Right cardiac atrium (tissue), 5 donors: ENCODE measurements at regions of chr20 and their contacts with region 1.

Region 1: GRCh38 chr20:23050847-23051631 is 1.6 kb upstream of the THBD start:
- DNase-seq: peak; percentile 86 to 96 (median 94)
- ATAC-seq: peak; percentile 60 to 62
- H3K4me3 ChIP-seq: peak overlapping the region; percentile 39
- H3K27ac ChIP-seq: peak overlapping the region; percentile 21
- H3K4me1 ChIP-seq: no peaks in the 10 kb centered on the region
- H3K27me3 ChIP-seq: no peaks in the 10 kb centered on the region

Region 2: DNA sequence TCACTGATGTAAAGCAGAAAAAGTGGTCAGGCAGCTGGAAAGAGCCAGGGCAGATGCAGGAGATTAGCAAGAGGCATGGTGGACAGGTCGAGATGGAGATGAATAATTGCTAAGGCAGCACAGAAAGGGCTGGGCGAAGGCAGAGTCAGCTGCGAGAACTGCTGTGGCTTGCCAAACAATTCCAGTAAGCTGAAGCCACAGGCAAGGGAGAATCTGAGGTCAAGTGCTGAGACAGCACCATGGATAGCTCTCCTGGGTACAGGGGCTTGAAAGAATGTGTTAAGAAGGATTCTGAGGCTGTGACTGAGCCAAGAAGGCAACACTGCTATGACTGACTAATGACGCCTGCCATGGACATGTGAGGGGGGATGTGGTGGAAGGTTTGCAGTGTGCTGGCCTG is 245.8 kb before region 1 on chr20:
- intact Hi-C with region 1: loop called in 1 of 4 experiments (anchors 10 kb)
- DNase-seq: peak; percentile 49 to 77 (median 77)
- ATAC-seq: peak; percentile 84 to 86
- H3K4me3 ChIP-seq: no peak overlapping the region
- H3K27ac ChIP-seq: no peak overlapping the region
- H3K4me1 ChIP-seq: peaks cover 2% of the 10 kb centered on the region
- H3K27me3 ChIP-seq: no peaks in the 10 kb centered on the region

Region 3: DNA sequence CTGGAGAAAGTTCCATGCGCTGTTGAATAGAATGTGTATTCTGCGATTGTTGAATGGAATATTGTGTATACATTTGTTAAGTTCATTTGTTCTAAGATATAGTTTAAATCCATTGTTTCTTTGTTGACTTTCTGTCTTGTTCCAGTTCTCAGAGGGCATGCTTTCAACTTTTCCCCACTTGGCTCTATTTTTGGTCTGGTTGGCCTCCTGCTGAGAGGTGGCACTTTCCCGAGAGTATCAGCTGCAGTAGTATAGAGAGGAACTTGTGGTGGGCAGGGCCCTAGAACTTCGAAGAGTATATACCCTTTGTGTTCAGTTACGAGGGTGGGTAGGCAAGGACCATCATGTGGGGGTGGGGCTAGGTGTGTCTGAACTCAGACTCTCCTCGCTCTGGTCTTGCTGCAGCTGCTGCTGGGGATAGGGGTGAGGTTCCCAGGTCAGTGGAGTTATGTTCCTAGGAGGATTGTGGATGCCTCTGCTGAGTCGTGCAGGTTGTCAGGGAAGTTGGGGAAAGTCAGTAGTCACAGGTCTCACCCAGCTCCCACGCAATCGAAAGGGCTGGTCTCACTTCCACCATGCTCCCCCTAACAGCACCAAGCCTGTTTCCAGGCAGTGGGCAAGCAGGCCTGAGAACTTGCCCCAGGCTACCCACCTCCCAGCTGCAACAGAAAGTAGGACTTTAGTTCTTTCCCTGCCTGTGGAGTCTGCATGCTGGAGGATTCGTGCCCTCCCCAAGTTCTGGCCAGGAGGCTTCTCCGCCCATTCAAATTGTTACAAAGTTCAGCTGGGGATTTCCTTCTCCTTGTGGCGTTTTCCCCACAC is 134.8 kb before region 1 on chr20:
- intact Hi-C with region 1: no loop called
- DNase-seq: no peak
- ATAC-seq: no peak
- H3K4me3 ChIP-seq: no peak overlapping the region
- H3K27ac ChIP-seq: no peak overlapping the region
- H3K4me1 ChIP-seq: no peaks in the 10 kb centered on the region
- H3K27me3 ChIP-seq: no peaks in the 10 kb centered on the region

Region 4: DNA sequence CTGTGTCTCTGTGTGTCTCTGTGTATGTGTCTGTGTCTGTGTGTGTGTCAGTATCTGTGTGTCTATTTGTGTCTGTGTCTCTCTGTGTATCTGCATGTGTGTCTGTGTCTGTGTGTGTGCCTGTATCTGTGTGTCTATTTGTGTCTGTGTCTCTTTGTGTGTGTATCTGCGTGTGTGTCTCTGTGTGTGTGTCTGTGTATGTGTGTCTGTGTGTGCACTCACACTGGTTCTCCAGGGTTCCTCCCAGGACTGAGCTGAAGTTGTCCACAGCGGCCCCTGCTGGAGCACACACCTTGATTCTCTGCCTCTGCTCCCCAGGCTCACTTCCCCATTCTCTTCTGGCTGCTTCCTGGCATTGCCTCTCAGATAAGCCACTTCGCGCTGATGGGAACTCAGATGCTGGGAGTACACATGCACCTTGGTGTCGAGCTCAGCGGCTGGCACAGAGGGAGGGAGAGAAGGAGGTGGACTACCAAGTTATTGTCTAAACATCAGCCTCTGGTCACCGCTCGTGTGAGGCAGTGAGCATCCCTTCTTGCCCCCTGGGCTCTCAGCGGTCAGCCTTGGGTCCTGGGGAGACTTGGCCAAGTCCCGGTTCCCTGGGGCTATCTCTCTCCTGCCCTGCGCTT is 194.6 kb after region 1 on chr20:
- intact Hi-C with region 1: loop called in 2 of 4 experiments (anchors 5 kb)
- DNase-seq: peak; percentile 73 to 85 (median 84)
- ATAC-seq: peak; percentile 70 to 82
- H3K4me3 ChIP-seq: no peak overlapping the region
- H3K27ac ChIP-seq: peak overlapping the region; percentile 25
- H3K4me1 ChIP-seq: no peaks in the 10 kb centered on the region
- H3K27me3 ChIP-seq: no peaks in the 10 kb centered on the region

Region 5: DNA sequence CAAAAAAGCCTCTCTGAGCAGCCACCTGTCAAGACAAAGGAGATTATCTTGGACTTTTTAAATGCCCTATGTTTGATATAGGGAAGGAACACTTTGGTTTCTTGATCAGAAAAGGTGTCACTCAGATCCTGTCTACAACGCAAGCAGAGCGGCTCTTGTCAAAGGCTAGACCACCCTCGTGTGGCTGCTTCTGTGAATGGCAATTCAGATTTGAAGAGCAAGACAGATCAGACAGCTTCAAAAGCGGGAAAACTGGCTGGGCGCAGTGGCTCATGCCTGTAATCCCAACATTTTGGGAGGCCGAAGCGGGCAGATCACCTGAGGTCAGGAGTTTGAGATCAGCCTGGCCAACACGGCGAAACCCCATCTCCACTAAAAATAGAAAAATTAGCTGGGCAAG is 289.5 kb after region 1 on chr20:
- intact Hi-C with region 1: loop called in 2 of 4 experiments (anchors 2 to 10 kb)
- DNase-seq: peak; percentile 64 to 88 (median 78)
- ATAC-seq: peak; percentile 80 to 90
- H3K4me3 ChIP-seq: no peak overlapping the region
- H3K27ac ChIP-seq: no peak overlapping the region
- H3K4me1 ChIP-seq: no peaks in the 10 kb centered on the region
- H3K27me3 ChIP-seq: no peaks in the 10 kb centered on the region

Region 6: DNA sequence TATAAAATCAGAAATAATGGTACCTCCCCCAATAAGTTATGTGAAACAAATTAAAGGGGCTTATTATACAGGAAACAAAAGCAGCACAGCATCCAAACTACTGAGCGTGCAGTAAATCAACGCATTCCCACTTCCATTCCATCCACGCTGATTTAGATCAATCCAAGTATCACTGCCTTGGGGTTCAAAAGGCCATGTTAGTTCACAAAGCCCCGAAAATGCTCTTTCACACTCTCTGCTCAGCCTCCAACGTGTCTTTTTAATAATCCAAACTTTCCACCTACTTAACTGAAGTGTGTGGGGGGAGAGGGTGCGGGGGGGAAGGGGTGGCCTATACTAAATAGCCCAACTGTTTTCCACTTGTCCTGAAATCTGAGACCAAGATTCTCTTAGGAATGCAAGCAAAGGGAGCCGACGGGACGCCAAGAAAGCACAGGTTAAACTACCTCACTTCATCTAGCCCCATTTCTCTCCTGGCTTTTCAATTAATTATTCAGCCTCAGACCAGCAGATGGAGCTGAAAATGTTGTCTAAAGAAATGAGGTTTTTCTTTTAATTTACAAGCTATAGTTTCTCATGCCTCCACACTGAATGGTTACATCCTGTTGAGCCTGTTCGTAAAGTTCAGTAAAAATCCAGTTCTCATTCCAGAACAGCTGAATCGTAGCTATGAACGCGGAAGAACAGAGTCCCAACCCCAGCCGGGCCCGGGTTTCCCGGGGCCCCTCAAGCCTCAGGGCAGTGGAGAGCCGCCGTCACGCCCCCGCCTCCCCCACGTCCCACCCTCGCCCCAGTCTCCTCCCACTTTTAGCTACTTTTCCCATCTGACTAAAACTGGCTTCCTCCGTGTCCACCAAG is 298.5 kb after region 1 on chr20:
- intact Hi-C with region 1: loop called in 1 of 4 experiments (anchors 10 kb)
- DNase-seq: peak in 2 of 3 donors; percentile 50 to 83
- ATAC-seq: peak; percentile 85 to 86
- H3K4me3 ChIP-seq: peak overlapping the region; percentile 83
- H3K27ac ChIP-seq: peak overlapping the region; percentile 100
- H3K4me1 ChIP-seq: no peaks in the 10 kb centered on the region
- H3K27me3 ChIP-seq: no peaks in the 10 kb centered on the region